ENCODE measurements at regions of chr5 and their contacts with region 1.

Region 1: DNA sequence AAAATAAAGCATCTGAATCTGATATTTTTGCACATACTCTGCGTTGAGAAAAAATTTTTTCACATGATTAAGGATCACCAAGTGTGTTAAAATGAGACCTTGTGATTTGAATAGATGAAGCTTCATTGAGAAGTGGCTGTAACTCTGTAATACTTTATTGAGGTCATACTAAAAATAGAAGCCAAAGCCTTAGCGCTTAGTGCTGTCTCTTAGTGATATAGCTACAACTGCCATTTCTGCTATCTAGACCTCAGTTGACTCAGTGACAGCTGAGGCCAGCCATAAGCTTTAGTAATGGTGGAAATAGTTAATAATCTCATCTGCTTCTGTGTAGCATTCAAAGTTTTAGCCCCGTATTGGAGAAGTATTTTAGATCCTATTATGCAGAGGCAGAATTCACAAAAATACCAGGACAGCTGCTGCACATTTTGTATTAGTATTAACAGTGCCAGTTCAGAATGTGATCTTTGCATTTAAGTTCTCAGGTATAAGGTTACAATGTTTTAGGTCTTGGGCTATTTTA is 107.4 kb upstream of the SGCD start:
- DNase-seq: no peak
- H3K4me3 ChIP-seq: no peak overlapping the region
- H3K27ac ChIP-seq: no peak overlapping the region
- H3K4me1 ChIP-seq: no peaks in the 10 kb centered on the region
- H3K27me3 ChIP-seq: no peaks in the 10 kb centered on the region
- CTCF ChIP-seq: no peak
- EP300 ChIP-seq: no peak
- POLR2A ChIP-seq: no peak

Region 2: DNA sequence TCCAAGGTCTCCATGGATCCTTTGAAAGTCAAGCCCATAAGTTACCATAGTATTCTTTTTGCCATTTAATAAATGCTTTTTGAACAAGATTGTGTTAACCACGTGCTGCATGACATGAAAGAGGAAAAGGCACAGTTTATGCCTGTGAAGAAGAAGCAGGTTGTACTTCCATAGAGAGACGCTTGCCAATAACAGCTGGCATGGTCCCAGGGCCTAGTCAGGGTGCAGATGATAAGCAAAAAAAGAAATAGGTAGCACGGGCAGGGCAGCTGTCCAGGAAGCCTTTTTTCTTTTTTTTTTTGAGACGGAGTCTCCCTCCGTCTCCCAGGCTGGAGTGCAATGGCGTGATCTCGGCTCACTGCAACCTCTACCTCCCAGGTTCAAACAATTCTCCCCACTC is 1711.2 kb after region 1 on chr5:
- in situ Hi-C with region 1: no loop called
- intact Hi-C with region 1: loop called (anchors 10 kb)
- DNase-seq: peak; percentile 65
- H3K4me3 ChIP-seq: no peak overlapping the region
- H3K27ac ChIP-seq: no peak overlapping the region
- H3K4me1 ChIP-seq: peaks cover 0 to 21% (median 9%) of the 10 kb centered on the region in 4 donors
- H3K27me3 ChIP-seq: no peaks in the 10 kb centered on the region
- CTCF ChIP-seq: no peak
- EP300 ChIP-seq: no peak
- POLR2A ChIP-seq: no peak

Measured in transverse colon (tissue), 4 donors.